Right ventricle myocardium inferior (tissue), 1 donor: ENCODE measurements at regions of chr19 and their contacts with region 1.

Region 1: GRCh38 chr19:53659292-53659691 is 27.5 kb downstream of the DPRX start:
- DNase-seq: no peak
- ATAC-seq: no peak

Region 2: GRCh38 chr19:53597023-53597422 is 62.3 kb before region 1 on chr19:
- intact Hi-C with region 1: loop called (anchors 2 kb)
- DNase-seq: no peak
- ATAC-seq: no peak